PC-9 (cell line): ENCODE measurements at regions of chr7 and their contacts with region 1.

Region 1: GRCh38 chr7:11236680-11237079 is 263.0 kb downstream of the PHF14 start:
- DNase-seq: no peak
- H3K4me3 ChIP-seq: no peak overlapping the region
- H3K27ac ChIP-seq: no peak overlapping the region
- H3K4me1 ChIP-seq: no peaks in the 10 kb centered on the region
- H3K27me3 ChIP-seq: no peaks in the 10 kb centered on the region
- CTCF ChIP-seq: no peak

Region 2: DNA sequence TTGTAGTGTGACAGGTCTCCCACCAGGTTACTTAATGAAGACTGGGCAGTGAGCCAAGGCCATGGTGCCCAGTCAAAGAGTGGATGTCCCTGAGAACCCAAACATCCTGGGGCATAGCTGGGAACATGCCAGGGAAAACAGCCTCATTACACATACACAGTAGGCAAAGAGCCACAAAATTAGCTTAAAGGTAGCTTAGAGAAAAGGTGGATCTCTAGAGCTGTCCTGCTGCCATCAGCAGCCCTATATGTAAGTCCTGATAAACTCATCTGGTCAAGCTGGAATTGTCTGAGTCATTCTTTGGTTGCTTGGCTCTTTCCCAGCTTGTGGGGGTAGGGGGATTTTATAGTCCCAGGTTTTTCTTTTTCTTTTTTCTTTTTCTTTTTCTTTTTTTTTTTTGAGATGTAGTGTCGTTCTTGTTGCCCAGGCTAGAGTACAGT is 24.9 kb after region 1 on chr7:
- CTCF ChIA-PET with region 1: no interaction called
- POLR2A ChIA-PET with region 1: interaction called, 26 read pairs
- intact Hi-C with region 1: no loop called
- DNase-seq: peak; percentile 78 to 82
- H3K4me3 ChIP-seq: no peak overlapping the region
- H3K27ac ChIP-seq: no peak overlapping the region
- H3K4me1 ChIP-seq: peaks cover 19% of the 10 kb centered on the region
- H3K27me3 ChIP-seq: peaks cover 15% of the 10 kb centered on the region
- CTCF ChIP-seq: no peak